T-cell (primary cell): ENCODE measurements at regions of chr13 and their contacts with region 1.

Region 1: GRCh38 chr13:49124693-49125304 is 95.3 kb upstream of the MLNR start:
- DNase-seq: no peak
- ATAC-seq: no peak
- H3K4me3 ChIP-seq: no peak overlapping the region
- H3K4me3 Mint-ChIP-seq: no peak overlapping the region
- H3K27ac ChIP-seq: no peak overlapping the region
- H3K27ac Mint-ChIP-seq: peak overlapping the region; percentile 63 to 80
- H3K4me1 ChIP-seq: peaks cover 3 to 12% of the 10 kb centered on the region in 2 experiments
- H3K4me1 Mint-ChIP-seq: peaks cover 46 to 51% (median 47%) of the 10 kb centered on the region in 3 donors
- H3K27me3 ChIP-seq: no peaks in the 10 kb centered on the region
- H3K27me3 Mint-ChIP-seq: no peaks in the 10 kb centered on the region

Region 2: DNA sequence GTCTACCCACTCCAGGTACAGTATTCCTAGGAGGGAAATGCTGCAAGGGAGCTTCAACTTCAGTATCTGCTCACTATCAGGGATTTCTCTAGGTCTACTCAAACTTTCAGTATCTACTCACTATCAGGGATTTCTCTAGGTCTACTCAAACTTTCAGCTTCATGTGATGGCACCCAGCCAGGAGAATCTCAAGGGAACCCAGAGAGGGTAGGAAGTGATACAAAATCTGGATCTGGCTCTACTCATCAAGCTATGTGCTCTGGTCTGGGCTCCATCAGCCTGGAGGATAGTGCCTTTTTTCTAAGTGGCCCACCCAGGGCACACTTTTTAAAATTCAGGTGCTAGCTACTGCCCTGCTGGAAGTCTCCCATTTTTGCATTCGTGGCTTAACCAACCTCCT is 201.4 kb before region 1 on chr13:
- CTCF ChIA-PET with region 1: no interaction called
- POLR2A ChIA-PET with region 1: no interaction called
- DNase-seq: no peak
- ATAC-seq: no peak
- H3K4me3 ChIP-seq: no peak overlapping the region
- H3K4me3 Mint-ChIP-seq: no peak overlapping the region
- H3K27ac ChIP-seq: no peak overlapping the region
- H3K27ac Mint-ChIP-seq: no peak overlapping the region
- H3K4me1 ChIP-seq: no peaks in the 10 kb centered on the region
- H3K4me1 Mint-ChIP-seq: no peaks in the 10 kb centered on the region
- H3K27me3 ChIP-seq: no peaks in the 10 kb centered on the region
- H3K27me3 Mint-ChIP-seq: no peaks in the 10 kb centered on the region

Region 3: GRCh38 chr13:49046002-49046401 is 78.8 kb before region 1 on chr13:
- CTCF ChIA-PET with region 1: interaction called in 1 of 2 experiments, 10 read pairs
- POLR2A ChIA-PET with region 1: no interaction called
- DNase-seq: no peak
- ATAC-seq: no peak
- H3K4me3 ChIP-seq: no peak overlapping the region
- H3K4me3 Mint-ChIP-seq: no peak overlapping the region
- H3K27ac ChIP-seq: no peak overlapping the region
- H3K27ac Mint-ChIP-seq: peak overlapping the region in 1 of 2 donors; percentile 27
- H3K4me1 ChIP-seq: no peaks in the 10 kb centered on the region
- H3K4me1 Mint-ChIP-seq: peaks cover 39 to 53% (median 49%) of the 10 kb centered on the region in 3 donors
- H3K27me3 ChIP-seq: no peaks in the 10 kb centered on the region
- H3K27me3 Mint-ChIP-seq: no peaks in the 10 kb centered on the region

Region 4: GRCh38 chr13:49110122-49110912 is 14.5 kb before region 1 on chr13:
- CTCF ChIA-PET with region 1: no interaction called
- POLR2A ChIA-PET with region 1: interaction called, 5 to 11 read pairs
- DNase-seq: peak; percentile 47 to 90 (median 66)
- ATAC-seq: peak; percentile 51 to 87 (median 70)
- H3K4me3 ChIP-seq: peak overlapping the region; percentile 59 to 84
- H3K4me3 Mint-ChIP-seq: peak overlapping the region; percentile 83 to 93 (median 92)
- H3K27ac ChIP-seq: peak overlapping the region; percentile 35
- H3K27ac Mint-ChIP-seq: peak overlapping the region; percentile 85 to 91
- H3K4me1 ChIP-seq: peaks cover 10 to 22% of the 10 kb centered on the region in 2 experiments
- H3K4me1 Mint-ChIP-seq: peaks cover 31 to 45% (median 42%) of the 10 kb centered on the region in 3 donors
- H3K27me3 ChIP-seq: no peaks in the 10 kb centered on the region
- H3K27me3 Mint-ChIP-seq: no peaks in the 10 kb centered on the region

Region 5: GRCh38 chr13:49190901-49191300 is 66.1 kb after region 1 on chr13:
- CTCF ChIA-PET with region 1: no interaction called
- POLR2A ChIA-PET with region 1: no interaction called
- DNase-seq: no peak
- ATAC-seq: no peak
- H3K4me3 ChIP-seq: no peak overlapping the region
- H3K4me3 Mint-ChIP-seq: no peak overlapping the region
- H3K27ac ChIP-seq: no peak overlapping the region
- H3K27ac Mint-ChIP-seq: peak overlapping the region in 1 of 2 donors; percentile 19
- H3K4me1 ChIP-seq: no peaks in the 10 kb centered on the region
- H3K4me1 Mint-ChIP-seq: peaks cover 0 to 4% (median 4%) of the 10 kb centered on the region in 3 donors
- H3K27me3 ChIP-seq: no peaks in the 10 kb centered on the region
- H3K27me3 Mint-ChIP-seq: no peaks in the 10 kb centered on the region